Endothelial cell of umbilical vein (primary cell): ENCODE measurements at regions of chr3 and their contacts with region 1.

Region 1: DNA sequence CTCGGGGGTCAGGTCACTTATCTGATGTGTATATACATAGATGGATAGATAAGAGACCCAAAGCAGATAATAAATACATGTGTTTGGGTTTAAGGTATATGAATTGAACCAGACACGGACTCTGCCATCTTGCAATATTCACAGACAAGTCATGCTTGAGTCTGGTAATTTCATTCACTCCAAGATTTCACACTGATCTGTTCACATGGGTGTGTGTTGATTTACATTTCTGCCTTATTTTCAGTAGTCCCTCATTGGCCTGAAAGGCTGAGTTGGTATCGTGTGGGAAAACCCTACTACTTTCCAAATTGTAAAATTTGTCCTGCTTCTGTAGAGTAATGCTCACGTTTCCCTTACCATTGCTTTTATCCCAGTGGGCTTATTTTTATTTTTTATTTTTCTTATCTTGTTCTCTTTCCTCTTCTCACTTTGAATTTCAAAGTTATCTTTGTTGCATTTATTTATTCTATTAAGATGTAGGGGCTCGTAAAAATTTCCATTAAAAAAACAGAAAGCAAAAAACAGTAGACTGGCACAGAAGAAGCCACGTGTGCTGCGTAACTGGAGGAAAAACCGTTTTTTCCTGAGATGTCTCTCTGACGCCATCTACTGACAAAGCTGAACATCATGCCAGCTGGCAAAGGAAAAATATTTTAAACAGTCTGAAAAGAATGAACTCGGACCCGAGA is 10.8 kb upstream of the MFSD1 start:
- DNase-seq: peak; percentile 71
- H3K4me3 ChIP-seq: peak overlapping the region in 1 of 3 experiments; percentile 3
- H3K27ac ChIP-seq: no peak overlapping the region
- H3K4me1 ChIP-seq: peaks cover 8% of the 10 kb centered on the region
- H3K27me3 ChIP-seq: no peaks in the 10 kb centered on the region
- CTCF ChIP-seq: peak; percentile 67 to 72
- POLR2A ChIP-seq: no peak

Region 2: DNA sequence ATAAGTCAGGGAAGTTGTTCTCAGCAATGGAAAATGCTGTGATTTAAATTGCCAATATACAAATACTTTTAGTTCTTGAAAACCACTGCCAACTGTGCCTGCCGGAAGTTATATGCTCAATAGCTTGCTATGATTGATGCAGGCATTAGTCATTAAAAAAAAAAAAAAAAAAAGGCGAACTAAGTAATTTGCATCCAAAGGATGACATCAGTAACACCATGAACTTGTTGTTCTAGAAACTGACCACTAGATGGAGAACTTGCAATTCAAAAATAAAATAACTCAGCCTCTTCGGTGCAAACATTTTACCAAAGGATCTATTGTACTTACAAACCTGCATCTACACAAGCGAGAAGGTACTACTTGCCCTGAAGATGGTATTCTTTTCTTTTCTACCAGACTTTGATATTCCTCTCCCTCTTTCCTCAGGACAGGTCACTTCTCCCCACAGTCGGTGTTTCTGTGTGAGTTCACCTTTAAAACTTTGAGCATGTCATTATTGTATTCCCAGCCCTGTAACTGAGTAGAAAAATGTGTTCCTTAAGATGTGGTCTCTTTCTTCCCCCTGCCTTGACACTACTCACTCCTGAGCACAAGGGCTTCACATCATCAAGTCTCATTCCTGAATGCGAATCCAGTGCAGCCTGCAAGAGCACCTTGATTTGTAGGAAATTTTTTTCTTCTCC is 1172.8 kb before region 1 on chr3:
- CTCF ChIA-PET with region 1: no interaction called
- POLR2A ChIA-PET with region 1: no interaction called
- dilution Hi-C with region 1: no loop called
- intact Hi-C with region 1: loop called (anchors 2 kb)
- DNase-seq: peak; percentile 66
- H3K4me3 ChIP-seq: no peak overlapping the region
- H3K27ac ChIP-seq: no peak overlapping the region
- H3K4me1 ChIP-seq: peaks cover 3% of the 10 kb centered on the region
- H3K27me3 ChIP-seq: peaks cover 2 to 44% of the 10 kb centered on the region in 2 experiments
- CTCF ChIP-seq: peak; percentile 38 to 45
- POLR2A ChIP-seq: no peak

Region 3: DNA sequence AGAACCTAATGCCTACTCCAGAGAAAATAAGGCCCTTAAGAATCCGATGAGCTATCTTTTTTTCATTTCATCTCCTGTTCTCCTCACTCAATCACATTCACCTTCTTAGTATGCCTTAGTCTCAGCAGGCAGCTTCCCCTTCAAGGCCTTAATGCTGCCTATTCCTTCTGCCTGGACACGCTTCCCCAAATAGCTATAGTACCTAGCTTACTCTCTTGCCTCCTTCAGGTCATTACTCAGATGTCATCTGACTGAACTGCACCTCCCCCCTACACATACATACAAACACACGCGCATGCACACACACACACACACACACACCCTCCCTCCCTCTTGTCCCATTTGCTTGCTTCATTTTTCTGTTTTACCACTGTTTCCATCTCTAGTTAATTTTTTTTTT is 411.5 kb before region 1 on chr3:
- CTCF ChIA-PET with region 1: no interaction called
- POLR2A ChIA-PET with region 1: no interaction called
- dilution Hi-C with region 1: no loop called
- intact Hi-C with region 1: no loop called
- DNase-seq: no peak
- H3K4me3 ChIP-seq: no peak overlapping the region
- H3K27ac ChIP-seq: no peak overlapping the region
- H3K4me1 ChIP-seq: no peaks in the 10 kb centered on the region
- H3K27me3 ChIP-seq: no peaks in the 10 kb centered on the region
- CTCF ChIP-seq: no peak
- POLR2A ChIP-seq: no peak

Region 4: DNA sequence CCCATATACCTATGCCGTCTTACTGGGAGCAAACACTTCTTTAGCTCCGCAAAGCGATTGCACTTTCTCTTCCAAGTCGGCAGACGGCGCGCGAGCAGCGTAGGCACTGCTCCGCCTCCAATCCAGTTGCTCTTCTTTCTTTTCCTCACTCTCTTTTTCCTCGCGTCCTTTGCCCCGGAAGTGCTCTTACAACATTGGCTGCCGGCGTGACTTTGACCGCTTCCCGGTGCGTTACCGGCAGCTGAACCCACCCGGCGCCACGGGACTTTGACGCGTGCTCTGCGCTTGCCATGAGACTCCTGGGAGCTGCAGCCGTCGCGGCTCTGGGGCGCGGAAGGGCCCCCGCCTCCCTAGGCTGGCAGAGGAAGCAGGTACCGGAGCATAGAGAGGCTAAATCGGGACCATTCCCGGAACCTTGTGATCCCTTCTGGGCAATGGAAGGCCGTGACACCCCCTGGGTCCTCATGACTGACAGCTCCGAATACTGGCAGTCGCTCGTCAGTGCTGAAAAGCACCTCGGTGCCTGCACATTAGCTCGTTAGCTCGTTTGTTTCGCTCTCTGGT is 146.6 kb before region 1 on chr3 and contains the start of gene GFM1:
- CTCF ChIA-PET with region 1: interaction called, 22 read pairs
- POLR2A ChIA-PET with region 1: no interaction called
- dilution Hi-C with region 1: no loop called
- intact Hi-C with region 1: loop called (anchors 2 kb)
- DNase-seq: peak; percentile 97
- H3K4me3 ChIP-seq: peak within 1 kb of the TSS; percentile 41 to 95 (median 74)
- H3K27ac ChIP-seq: peak within 1 kb of the TSS; percentile 60
- H3K4me1 ChIP-seq: peaks cover 17% of the 10 kb centered on the region
- H3K27me3 ChIP-seq: no peaks in the 10 kb centered on the region
- CTCF ChIP-seq: peak; percentile 88 to 93
- POLR2A ChIP-seq: peak; percentile 72
- total RNA-seq, gene GFM1: 60.1 and 68.6 TPM in 2 replicates

Region 5: GRCh38 chr3:158659454-158660237 is 131.4 kb before region 1 on chr3:
- CTCF ChIA-PET with region 1: interaction called, 247 read pairs
- POLR2A ChIA-PET with region 1: no interaction called
- dilution Hi-C with region 1: no loop called
- intact Hi-C with region 1: loop called (anchors 1 kb)
- DNase-seq: peak; percentile 95
- H3K4me3 ChIP-seq: no peak overlapping the region
- H3K27ac ChIP-seq: peak overlapping the region; percentile 95
- H3K4me1 ChIP-seq: peaks cover 28% of the 10 kb centered on the region
- H3K27me3 ChIP-seq: no peaks in the 10 kb centered on the region
- CTCF ChIP-seq: peak; percentile 75 to 77
- POLR2A ChIP-seq: no peak

Region 6: DNA sequence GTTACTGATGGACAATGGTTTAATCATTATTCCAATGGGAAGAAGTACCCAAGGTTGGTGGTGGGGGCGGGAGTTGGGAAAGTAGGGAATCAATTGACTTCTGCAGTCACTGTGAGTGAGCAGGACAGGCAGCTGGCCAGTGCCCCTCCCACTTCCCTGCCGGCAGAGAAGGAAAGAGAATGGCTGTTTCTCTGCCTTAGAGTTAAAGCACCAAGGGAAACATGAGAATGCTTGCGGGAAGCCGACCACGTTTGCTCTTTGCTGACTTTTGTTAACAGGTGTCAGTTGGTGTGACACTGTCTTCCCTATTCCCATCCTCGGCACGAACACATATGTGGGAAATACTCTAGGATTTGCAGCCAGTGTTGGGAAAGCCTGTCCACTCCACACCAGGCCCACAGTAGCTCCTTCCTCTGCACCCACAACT is 22.7 kb before region 1 on chr3:
- CTCF ChIA-PET with region 1: interaction called, 11 read pairs
- POLR2A ChIA-PET with region 1: no interaction called
- dilution Hi-C with region 1: no loop called
- intact Hi-C with region 1: no loop called
- DNase-seq: peak; percentile 75
- H3K4me3 ChIP-seq: no peak overlapping the region
- H3K27ac ChIP-seq: peak overlapping the region; percentile 3
- H3K4me1 ChIP-seq: peaks cover 23% of the 10 kb centered on the region
- H3K27me3 ChIP-seq: no peaks in the 10 kb centered on the region
- CTCF ChIP-seq: no peak
- POLR2A ChIP-seq: no peak

Region 7: GRCh38 chr3:158845765-158846350 is 54.8 kb after region 1 on chr3:
- CTCF ChIA-PET with region 1: interaction called, 7 read pairs
- POLR2A ChIA-PET with region 1: no interaction called
- dilution Hi-C with region 1: no loop called
- intact Hi-C with region 1: loop called (anchors 1 kb)
- DNase-seq: peak; percentile 30
- H3K4me3 ChIP-seq: no peak overlapping the region
- H3K27ac ChIP-seq: no peak overlapping the region
- H3K4me1 ChIP-seq: no peaks in the 10 kb centered on the region
- H3K27me3 ChIP-seq: no peaks in the 10 kb centered on the region
- CTCF ChIP-seq: peak; percentile 49 to 60
- POLR2A ChIP-seq: no peak